Activated CD8-positive, alpha-beta T cell treated with anti-CD3 and anti-CD28 coated beads, Interleukin-2, amount 10 ng/mL, durations not matched to agents 7 days and 5 days (primary cell): ENCODE measurements at regions of chr9 and their contacts with region 1.

Region 1: GRCh38 chr9:136728080-136728547 is 14.6 kb downstream of the LCN10 start:
- DNase-seq: peak; percentile 93
- ATAC-seq: peak; percentile 85
- H3K4me3 Mint-ChIP-seq: peak overlapping the region; percentile 92
- H3K27ac Mint-ChIP-seq: peak overlapping the region; percentile 30
- H3K4me1 Mint-ChIP-seq: peaks cover 42% of the 10 kb centered on the region
- H3K27me3 Mint-ChIP-seq: no peaks in the 10 kb centered on the region

Region 2: DNA sequence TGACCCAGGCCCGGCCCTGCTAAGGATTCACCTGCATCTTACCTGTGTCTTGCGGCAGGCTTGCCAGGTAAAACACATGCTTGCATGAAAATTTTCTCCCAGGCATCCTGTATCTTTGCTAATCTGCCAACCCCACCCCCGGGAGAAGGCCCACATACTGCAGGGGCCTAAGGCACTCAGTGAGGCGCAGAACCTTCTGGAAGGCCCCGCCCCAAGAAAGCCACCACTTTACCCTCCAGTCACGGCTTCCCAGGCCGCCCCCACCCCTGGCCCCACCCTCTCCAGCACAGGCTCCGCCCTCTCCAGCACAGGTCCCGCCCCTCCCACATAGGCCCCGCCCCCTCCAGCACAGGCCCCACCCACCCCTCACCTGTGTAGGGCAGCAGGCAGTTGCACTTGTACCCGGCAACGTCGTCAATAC is 215.5 kb before region 1 on chr9:
- CTCF ChIA-PET with region 1: no interaction called
- POLR2A ChIA-PET with region 1: no interaction called
- DNase-seq: peak; percentile 38
- ATAC-seq: peak; percentile 50
- H3K4me3 Mint-ChIP-seq: no peak overlapping the region
- H3K27ac Mint-ChIP-seq: no peak overlapping the region
- H3K4me1 Mint-ChIP-seq: no peaks in the 10 kb centered on the region
- H3K27me3 Mint-ChIP-seq: no peaks in the 10 kb centered on the region

Region 3: GRCh38 chr9:136539427-136540421 is 188.4 kb before region 1 on chr9:
- CTCF ChIA-PET with region 1: interaction called, 5 read pairs
- POLR2A ChIA-PET with region 1: interaction called, 13 read pairs
- DNase-seq: peak; percentile 97
- ATAC-seq: peak; percentile 86
- H3K4me3 Mint-ChIP-seq: peak overlapping the region; percentile 79
- H3K27ac Mint-ChIP-seq: peak overlapping the region; percentile 99
- H3K4me1 Mint-ChIP-seq: peaks cover 80% of the 10 kb centered on the region
- H3K27me3 Mint-ChIP-seq: no peaks in the 10 kb centered on the region

Region 4: GRCh38 chr9:136619742-136620440 is 108.2 kb before region 1 on chr9:
- CTCF ChIA-PET with region 1: no interaction called
- POLR2A ChIA-PET with region 1: no interaction called
- DNase-seq: no peak
- ATAC-seq: no peak
- H3K4me3 Mint-ChIP-seq: no peak overlapping the region
- H3K27ac Mint-ChIP-seq: no peak overlapping the region
- H3K4me1 Mint-ChIP-seq: peaks cover 18% of the 10 kb centered on the region
- H3K27me3 Mint-ChIP-seq: no peaks in the 10 kb centered on the region

Region 5: GRCh38 chr9:136695955-136696354 is 32.2 kb before region 1 on chr9:
- CTCF ChIA-PET with region 1: interaction called, 23 read pairs
- POLR2A ChIA-PET with region 1: interaction called, 18 read pairs
- DNase-seq: no peak
- ATAC-seq: peak; percentile 13
- H3K4me3 Mint-ChIP-seq: no peak overlapping the region
- H3K27ac Mint-ChIP-seq: no peak overlapping the region
- H3K4me1 Mint-ChIP-seq: peaks cover 28% of the 10 kb centered on the region
- H3K27me3 Mint-ChIP-seq: peaks cover 14% of the 10 kb centered on the region

Region 6: DNA sequence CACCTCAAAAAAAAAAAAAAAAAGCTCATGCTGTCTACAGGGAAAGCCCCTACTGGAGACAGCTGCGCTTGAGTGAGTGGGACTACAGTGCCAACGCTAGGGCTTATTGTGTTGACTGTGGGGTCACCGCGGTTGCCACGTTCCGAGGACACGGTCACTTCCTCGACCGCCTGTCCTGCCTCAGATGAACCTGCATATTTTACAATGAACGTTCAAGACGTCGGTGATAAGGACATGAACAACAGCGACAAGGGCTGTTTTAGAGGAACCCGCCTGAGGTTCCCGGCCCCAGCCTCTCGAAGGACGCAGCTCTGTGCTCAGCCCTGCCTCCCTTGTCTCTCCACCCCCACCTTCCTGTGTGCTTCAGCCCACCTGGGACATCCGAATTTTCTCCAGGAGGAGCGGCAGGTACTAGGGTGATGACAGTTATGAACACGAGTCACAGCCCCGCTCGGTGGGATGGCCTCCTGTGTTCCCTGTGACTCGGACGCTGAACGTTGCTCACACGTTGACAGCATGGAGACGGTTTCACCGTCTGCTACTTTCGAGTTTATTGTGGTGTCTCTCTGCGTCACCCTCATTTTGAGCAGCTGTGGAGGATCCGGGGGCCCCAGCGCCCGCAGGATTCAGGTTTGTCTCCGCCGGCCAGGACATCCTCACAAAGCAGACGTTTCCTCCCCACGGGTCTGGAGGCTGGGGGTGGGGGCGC is 27.0 kb before region 1 on chr9:
- CTCF ChIA-PET with region 1: interaction called, 23 read pairs
- POLR2A ChIA-PET with region 1: interaction called, 18 read pairs
- DNase-seq: peak; percentile 78
- ATAC-seq: peak; percentile 88
- H3K4me3 Mint-ChIP-seq: peak overlapping the region; percentile 78
- H3K27ac Mint-ChIP-seq: peak overlapping the region; percentile 92
- H3K4me1 Mint-ChIP-seq: peaks cover 39% of the 10 kb centered on the region
- H3K27me3 Mint-ChIP-seq: peaks cover 27% of the 10 kb centered on the region

Region 7: DNA sequence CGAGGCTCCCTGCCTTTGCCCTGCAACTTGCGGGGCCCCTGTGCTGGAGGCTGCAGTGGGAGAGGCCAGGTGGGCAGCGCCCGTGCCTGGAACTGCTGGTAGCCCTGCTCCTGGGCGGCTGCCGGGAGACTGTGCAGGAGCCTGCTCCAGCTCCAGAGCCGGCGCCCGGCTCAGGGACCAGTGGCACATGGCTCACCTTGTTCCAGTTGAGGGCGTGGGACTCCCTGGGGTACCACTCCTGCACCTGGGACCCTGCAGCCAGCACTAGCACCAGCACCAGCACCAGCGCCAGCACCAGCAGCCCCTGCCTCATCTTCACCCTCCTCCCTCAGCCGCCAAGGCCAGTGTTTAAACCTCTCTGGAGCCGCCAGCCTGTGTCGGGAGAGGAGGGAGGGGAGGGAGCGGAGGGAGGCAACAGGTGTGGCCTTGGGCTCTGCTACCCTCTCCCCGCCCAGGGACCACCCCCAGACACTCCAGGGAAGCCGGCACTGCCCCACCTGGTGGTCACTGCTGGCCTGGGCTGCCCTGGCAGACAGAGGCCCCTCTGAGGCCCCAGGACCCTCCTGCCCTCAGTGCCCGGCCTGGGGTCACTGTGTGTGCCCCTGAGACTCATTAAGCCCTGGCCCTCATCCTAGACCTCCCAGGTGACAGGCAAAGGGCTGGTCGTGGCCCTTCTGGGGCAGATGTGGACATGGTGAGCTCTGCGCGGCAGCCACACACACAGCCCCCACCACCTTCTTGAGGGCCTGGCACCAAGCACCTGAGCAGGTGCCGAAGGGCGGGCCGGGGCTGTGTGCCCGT is 14.7 kb after region 1 on chr9 and contains the start of gene LCN10:
- CTCF ChIA-PET with region 1: interaction called, 5 read pairs
- POLR2A ChIA-PET with region 1: interaction called, 13 read pairs
- DNase-seq: no peak
- ATAC-seq: no peak
- H3K4me3 Mint-ChIP-seq: peak within 1 kb of the TSS; percentile 50
- H3K27ac Mint-ChIP-seq: peak within 1 kb of the TSS; percentile 57
- H3K4me1 Mint-ChIP-seq: peaks cover 7% of the 10 kb centered on the region
- H3K27me3 Mint-ChIP-seq: no peaks in the 10 kb centered on the region
- total RNA-seq, gene LCN10: 1.8 to 2.4 TPM

Region 8: GRCh38 chr9:136748666-136749611 is 20.8 kb after region 1 on chr9:
- CTCF ChIA-PET with region 1: interaction called, 14 read pairs
- POLR2A ChIA-PET with region 1: interaction called, 11 read pairs
- DNase-seq: no peak
- ATAC-seq: no peak
- H3K4me3 Mint-ChIP-seq: no peak overlapping the region
- H3K27ac Mint-ChIP-seq: peak overlapping the region; percentile 30
- H3K4me1 Mint-ChIP-seq: peaks cover 6% of the 10 kb centered on the region
- H3K27me3 Mint-ChIP-seq: peaks cover 12% of the 10 kb centered on the region